ENCODE measurements at regions of chr19 and their contacts with region 1.

Region 1: GRCh38 chr19:55516878-55517620 is 19.9 kb downstream of the SBK2 start:
- DNase-seq: peak; percentile 77 to 95 (median 90)
- ATAC-seq: peak; percentile 100
- H3K4me3 ChIP-seq: peak overlapping the region; percentile 12 to 60
- H3K4me3 Mint-ChIP-seq: peak overlapping the region; percentile 79
- H3K27ac ChIP-seq: peak overlapping the region; percentile 40 to 74
- H3K27ac Mint-ChIP-seq: peak overlapping the region; percentile 61
- H3K4me1 ChIP-seq: peaks cover 5% of the 10 kb centered on the region
- H3K4me1 Mint-ChIP-seq: peaks cover 3% of the 10 kb centered on the region
- H3K27me3 ChIP-seq: no peaks in the 10 kb centered on the region
- H3K27me3 Mint-ChIP-seq: peaks cover 2% of the 10 kb centered on the region
- CTCF ChIP-seq: peak; percentile 76

Region 2: GRCh38 chr19:55005684-55006488 is 511.2 kb before region 1 on chr19:
- CTCF ChIA-PET with region 1: no interaction called
- POLR2A ChIA-PET with region 1: no interaction called
- intact Hi-C with region 1: loop called in 1 of 2 experiments (anchors 5 kb)
- DNase-seq: peak; percentile 4 to 95 (median 54)
- ATAC-seq: peak; percentile 90
- H3K4me3 ChIP-seq: peak overlapping the region; percentile 52 to 53
- H3K4me3 Mint-ChIP-seq: peak overlapping the region; percentile 71
- H3K27ac ChIP-seq: peak overlapping the region; percentile 66 to 90
- H3K27ac Mint-ChIP-seq: peak overlapping the region; percentile 87
- H3K4me1 ChIP-seq: peaks cover 17% of the 10 kb centered on the region
- H3K4me1 Mint-ChIP-seq: peaks cover 24% of the 10 kb centered on the region
- H3K27me3 ChIP-seq: peaks cover 0 to 2% of the 10 kb centered on the region in 2 experiments
- H3K27me3 Mint-ChIP-seq: peaks cover 25% of the 10 kb centered on the region
- CTCF ChIP-seq: no peak

Region 3: DNA sequence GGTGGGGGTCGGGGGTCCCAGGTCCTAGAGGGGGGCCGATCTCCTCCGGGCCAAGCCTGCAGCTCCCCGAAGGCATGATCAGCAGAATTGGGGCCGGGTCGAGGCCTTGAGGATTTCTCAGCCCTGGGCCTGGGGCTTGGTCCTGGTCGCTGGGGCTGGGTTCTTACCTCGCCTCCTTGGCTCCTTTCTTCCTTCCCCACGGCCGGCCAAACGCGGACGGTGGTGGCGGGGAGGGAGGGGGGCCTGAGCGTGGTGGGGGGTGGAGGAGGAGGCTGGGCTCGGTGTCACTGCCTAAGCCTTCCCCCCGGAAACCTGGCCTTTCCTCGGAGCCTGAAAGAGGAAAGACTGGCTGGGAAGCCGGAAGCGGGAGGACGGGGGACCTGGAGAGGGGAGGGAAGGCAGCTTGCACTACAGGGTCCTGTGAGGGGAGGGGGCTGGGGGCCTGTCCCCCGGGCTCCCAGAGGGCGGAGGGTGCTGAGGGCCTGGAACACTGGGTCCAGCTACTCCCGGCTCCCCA is 63.6 kb after region 1 on chr19 and contains the start of gene ZNF579:
- CTCF ChIA-PET with region 1: no interaction called
- POLR2A ChIA-PET with region 1: no interaction called
- intact Hi-C with region 1: loop called (anchors 2 kb)
- DNase-seq: peak; percentile 39 to 86 (median 75)
- ATAC-seq: peak; percentile 71
- H3K4me3 ChIP-seq: peak within 1 kb of the TSS; percentile 70 to 90
- H3K4me3 Mint-ChIP-seq: peak within 1 kb of the TSS; percentile 91
- H3K27ac ChIP-seq: peak within 1 kb of the TSS; percentile 67 to 81
- H3K27ac Mint-ChIP-seq: peak within 1 kb of the TSS; percentile 93
- H3K4me1 ChIP-seq: peaks cover 20% of the 10 kb centered on the region
- H3K4me1 Mint-ChIP-seq: peaks cover 27% of the 10 kb centered on the region
- H3K27me3 ChIP-seq: no peaks in the 10 kb centered on the region
- H3K27me3 Mint-ChIP-seq: no peaks in the 10 kb centered on the region
- CTCF ChIP-seq: no peak
- total RNA-seq, gene ZNF579: 5.7 to 6.1 TPM

Region 4: GRCh38 chr19:55605207-55605636 is 88.2 kb after region 1 on chr19:
- CTCF ChIA-PET with region 1: interaction called, 24 read pairs
- POLR2A ChIA-PET with region 1: no interaction called
- intact Hi-C with region 1: loop called (anchors 1 kb)
- DNase-seq: peak; percentile 90 to 99 (median 98)
- ATAC-seq: peak; percentile 78
- H3K4me3 ChIP-seq: peak overlapping the region; percentile 60 to 80
- H3K4me3 Mint-ChIP-seq: peak overlapping the region; percentile 86
- H3K27ac ChIP-seq: peak overlapping the region; percentile 60 to 91
- H3K27ac Mint-ChIP-seq: peak overlapping the region; percentile 90
- H3K4me1 ChIP-seq: peaks cover 24% of the 10 kb centered on the region
- H3K4me1 Mint-ChIP-seq: peaks cover 60% of the 10 kb centered on the region
- H3K27me3 ChIP-seq: no peaks in the 10 kb centered on the region
- H3K27me3 Mint-ChIP-seq: no peaks in the 10 kb centered on the region
- CTCF ChIP-seq: no peak

Measured in CD8-positive, alpha-beta T cell (primary cell).